ENCODE measurements at regions of chr6 and their contacts with region 1.

Region 1: DNA sequence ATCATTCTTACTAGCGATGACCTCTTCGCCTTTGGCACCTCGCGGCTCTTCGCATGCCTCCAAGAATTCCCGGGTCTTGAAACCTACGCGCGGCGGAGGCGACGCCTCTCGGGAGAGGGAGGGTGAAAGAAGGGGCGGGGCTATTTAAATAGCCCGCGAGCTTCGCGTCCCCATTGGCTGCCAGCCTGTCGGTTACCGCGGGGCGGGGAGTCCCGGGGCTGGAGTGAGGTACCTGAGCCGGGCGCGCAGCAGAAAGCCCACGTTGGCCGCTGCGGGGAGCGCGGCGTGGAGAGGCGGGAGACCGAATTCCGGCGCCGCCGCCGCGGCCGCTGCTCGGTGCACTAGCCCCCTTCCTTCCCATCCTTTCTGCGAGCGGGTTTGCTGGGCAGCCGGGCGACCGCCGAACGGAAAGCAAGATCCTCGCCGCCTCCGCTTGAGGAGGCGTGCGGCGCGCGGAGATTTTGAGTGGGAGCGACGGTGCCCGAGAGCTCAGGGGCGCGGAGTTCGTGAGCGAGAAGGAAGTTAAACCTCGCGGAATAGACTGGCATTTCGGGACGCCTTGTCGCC is at the start of gene BMP6:
- DNase-seq: peak; percentile 82 to 90
- H3K4me3 ChIP-seq: peak within 1 kb of the TSS; percentile 50 to 66
- H3K27ac ChIP-seq: peak within 1 kb of the TSS in 1 of 2 donors; percentile 2
- H3K4me1 ChIP-seq: peaks cover 0 to 41% (median 33%) of the 10 kb centered on the region in 4 donors
- H3K27me3 ChIP-seq: peaks cover 0 to 47% of the 10 kb centered on the region in 2 donors
- CTCF ChIP-seq: no peak

Region 2: DNA sequence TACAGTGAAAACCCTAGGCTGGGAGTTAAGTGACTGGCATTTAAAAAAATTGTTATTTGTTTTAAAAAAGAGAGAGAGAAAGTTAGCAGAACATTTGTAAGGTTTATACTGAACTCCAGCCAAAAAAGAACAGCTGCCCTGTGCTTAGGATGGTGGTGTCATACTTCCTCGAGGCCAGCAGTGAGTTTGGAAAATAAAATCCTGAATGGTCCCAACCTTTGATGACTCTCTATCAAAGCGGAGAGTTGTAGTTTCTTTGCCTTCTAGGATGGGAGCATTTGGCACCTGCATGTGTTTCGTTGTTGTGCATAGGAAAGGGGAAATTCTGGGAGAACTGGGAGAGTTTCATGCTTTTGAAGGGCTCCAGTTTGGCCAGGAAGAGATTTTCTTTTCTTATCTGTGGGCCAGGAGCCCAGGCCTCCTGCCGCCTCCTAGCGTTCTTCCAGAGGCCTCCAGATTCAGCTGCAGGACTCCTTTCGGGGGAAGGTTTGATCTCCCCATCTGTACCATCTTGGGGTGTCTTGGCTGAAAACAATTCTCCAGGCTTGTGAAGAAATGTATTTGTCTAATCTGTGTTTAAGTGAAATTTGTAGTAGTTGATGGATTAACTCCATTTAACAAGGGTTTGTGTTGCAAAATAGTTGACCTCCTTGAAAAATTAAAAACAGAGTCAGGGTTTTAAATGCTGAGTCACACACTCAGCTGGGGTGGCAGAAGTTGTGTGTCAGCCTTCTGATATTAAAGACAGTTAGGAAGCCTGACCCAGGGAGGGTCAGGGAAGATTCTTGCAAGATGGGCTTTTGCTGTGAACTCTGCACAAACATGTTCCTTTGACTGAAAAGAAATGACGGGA is 121.3 kb after region 1 on chr6:
- intact Hi-C with region 1: loop called (anchors 5 kb)
- DNase-seq: no peak
- H3K4me3 ChIP-seq: no peak overlapping the region
- H3K27ac ChIP-seq: peak overlapping the region in 1 of 2 donors; percentile 41
- H3K4me1 ChIP-seq: peaks cover 0 to 19% (median 4%) of the 10 kb centered on the region in 4 donors
- H3K27me3 ChIP-seq: no peaks in the 10 kb centered on the region
- CTCF ChIP-seq: peak in 1 of 2 experiments; percentile 13

Region 3: DNA sequence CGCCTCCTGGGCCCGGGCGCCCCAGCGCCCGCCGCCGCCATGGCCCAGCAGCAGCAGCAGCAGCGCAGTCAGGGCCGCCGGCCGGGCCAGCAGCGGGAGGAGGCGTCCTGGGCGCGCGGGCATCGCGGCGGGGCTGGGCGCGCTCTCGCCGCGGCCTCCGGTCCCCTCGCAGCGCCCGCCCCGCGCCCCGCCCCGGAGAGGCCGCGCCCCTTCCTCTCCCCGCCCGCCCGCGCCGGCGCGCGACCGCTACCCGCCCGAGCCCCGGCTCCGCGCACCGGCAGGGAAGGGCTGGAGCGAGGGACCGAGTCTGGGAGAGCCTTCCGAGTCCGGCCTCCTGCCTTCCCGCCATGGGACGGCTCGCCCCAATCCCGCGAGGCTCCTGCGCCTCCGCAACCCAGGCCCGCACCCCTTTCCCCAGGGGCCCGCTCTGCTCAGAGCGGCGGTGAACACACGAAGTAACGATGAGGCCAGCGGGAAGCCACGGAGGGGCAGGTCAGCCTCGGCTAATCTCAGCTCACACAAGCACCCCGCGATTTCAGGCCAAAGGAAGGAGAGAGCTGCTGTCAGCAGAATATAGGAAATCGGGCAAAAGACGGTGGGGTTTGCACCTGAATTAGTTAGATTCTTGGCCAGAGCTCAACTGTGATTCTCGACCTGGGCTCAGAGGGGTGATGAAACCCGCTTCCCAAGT is 184.9 kb after region 1 on chr6 and contains the start of gene TXNDC5:
- intact Hi-C with region 1: loop called (anchors 5 kb)
- DNase-seq: peak; percentile 69 to 89
- H3K4me3 ChIP-seq: peak within 1 kb of the TSS; percentile 68 to 86
- H3K27ac ChIP-seq: peak within 1 kb of the TSS; percentile 77 to 78
- H3K4me1 ChIP-seq: peaks cover 0 to 23% (median 14%) of the 10 kb centered on the region in 4 donors
- H3K27me3 ChIP-seq: no peaks in the 10 kb centered on the region
- CTCF ChIP-seq: no peak

Region 4: DNA sequence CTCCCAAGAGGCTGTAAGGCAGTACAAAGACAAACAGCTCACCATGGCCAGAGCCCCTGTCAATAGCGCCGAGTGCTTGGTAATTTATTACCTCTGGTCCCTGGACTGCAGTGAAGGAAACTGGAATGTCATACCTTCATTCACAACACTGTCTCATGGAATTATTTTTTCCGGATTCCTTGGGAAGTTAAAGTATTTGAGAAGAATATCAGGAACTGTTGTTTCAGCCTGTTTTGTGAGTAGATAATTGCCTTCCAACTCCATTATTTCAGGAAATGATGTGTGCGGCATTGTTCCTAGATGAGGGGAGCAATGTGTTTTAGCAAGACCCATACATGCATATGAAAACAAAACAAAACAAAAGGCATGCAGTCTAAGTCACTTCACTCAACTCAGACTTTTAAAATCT is 274.3 kb after region 1 on chr6:
- intact Hi-C with region 1: loop called (anchors 5 kb)
- DNase-seq: no peak
- H3K4me3 ChIP-seq: no peak overlapping the region
- H3K27ac ChIP-seq: no peak overlapping the region
- H3K4me1 ChIP-seq: no peaks in the 10 kb centered on the region
- H3K27me3 ChIP-seq: no peaks in the 10 kb centered on the region
- CTCF ChIP-seq: no peak

Region 5: DNA sequence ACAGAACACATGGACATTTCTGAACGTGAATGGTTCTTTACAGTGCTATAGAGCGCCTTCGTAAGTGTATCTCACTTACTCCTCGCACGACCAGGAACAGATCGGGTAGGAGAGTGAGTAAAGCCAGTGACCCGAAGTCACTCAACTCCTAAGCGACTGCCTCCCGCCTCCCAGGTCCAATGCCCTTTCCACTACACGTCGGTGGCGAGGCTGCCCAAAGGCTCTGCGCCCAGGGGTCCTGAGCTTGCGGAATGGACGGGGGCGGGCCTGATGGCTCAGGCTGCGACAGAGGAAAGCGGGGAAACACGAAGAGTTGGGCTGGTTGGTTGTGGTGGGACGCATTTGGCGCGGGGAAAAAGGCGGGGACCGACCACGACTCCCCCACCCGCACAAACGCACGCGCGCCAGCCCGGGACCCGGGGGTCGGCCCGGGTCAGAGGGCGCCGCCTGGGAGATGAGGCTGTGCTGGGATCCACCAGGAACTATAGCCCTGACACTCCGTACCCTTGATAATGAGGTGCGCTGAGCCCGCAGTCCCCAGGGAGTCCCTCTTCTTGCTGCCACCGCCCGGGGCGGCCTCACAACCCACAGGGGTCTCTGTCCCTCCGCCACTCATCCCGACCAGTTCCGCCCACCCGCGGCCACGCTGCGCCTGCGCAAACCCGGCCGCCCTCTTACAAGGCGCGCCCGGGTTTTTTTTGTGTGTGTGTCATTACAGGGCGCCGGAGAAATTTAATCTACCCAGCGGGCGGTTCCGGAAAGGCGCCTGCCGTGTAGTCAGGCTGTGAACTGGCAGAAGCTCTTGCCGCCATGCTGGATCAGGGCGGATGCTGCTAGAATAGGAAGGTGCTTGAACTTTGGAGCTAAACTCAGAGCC is 338.1 kb after region 1 on chr6 and contains the start of gene BLOC1S5:
- intact Hi-C with region 1: loop called (anchors 5 kb)
- DNase-seq: peak; percentile 98
- H3K4me3 ChIP-seq: peak within 1 kb of the TSS; percentile 94 to 97
- H3K27ac ChIP-seq: peak within 1 kb of the TSS; percentile 94 to 97
- H3K4me1 ChIP-seq: peaks cover 0 to 7% (median 3%) of the 10 kb centered on the region in 4 donors
- H3K27me3 ChIP-seq: no peaks in the 10 kb centered on the region
- CTCF ChIP-seq: peak in 1 of 2 experiments; percentile 27